CD14-positive monocyte (primary cell): ENCODE measurements at regions of chr19 and their contacts with region 1.

Region 1: DNA sequence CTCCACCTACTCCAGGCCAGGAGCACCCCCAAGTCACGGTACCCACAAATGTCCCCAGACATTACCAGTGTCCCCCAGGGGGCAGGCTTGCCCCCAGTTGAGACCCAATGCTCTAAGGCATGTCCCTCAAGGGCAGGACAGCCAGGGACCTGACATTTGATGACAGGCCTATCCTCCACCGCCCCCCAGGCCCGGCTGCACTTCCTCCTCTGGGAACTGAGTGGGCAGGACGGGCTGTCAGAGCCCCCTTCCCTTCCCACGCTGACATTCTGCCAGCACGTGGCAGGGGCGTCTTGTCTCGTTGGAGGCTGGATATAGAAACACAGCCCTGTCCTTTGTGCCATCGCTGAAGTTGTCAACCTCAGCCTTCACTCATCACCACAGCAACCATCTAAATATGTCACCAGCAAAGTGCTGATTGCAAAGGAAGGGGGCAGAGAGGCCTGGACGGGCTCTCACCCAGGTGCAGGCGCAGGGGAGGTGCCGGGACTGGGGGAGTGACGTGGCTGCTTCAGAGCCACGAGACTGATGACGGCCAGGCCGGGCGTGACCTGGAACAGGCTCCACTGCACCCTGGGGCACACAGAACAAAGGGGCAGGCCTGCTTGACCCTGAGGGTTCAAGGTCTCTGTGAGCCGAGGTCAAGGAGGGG is 38.4 kb downstream of the GNG7 start:
- DNase-seq: no peak
- H3K4me3 ChIP-seq: no peak overlapping the region
- H3K4me3 Mint-ChIP-seq: no peak overlapping the region
- H3K27ac ChIP-seq: no peak overlapping the region
- H3K27ac Mint-ChIP-seq: no peak overlapping the region
- H3K4me1 ChIP-seq: no peaks in the 10 kb centered on the region
- H3K4me1 Mint-ChIP-seq: no peaks in the 10 kb centered on the region
- H3K27me3 ChIP-seq: no peaks in the 10 kb centered on the region
- H3K27me3 Mint-ChIP-seq: peaks cover 2 to 10% (median 4%) of the 10 kb centered on the region in 3 donors
- CTCF ChIP-seq: peak; percentile 17

Region 2: DNA sequence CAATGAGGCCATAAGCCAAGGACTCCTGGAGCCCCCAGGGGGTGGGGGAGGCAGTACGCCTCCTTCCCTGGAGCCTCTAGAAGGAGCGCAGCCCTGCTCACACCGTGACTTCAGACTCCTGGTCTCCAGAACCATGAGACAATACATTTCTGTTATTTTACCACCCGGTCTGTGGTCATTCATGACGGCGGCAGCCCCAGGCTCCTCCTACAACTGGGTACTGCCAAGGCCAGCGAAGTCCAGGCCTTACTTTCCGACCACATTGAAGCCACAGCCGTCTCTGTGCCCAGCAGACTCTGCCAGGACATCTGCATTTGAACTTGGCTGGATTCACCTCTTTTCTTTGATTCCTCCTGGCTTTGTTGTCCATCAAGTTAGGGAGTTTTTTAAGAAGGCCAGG is 27.9 kb after region 1 on chr19:
- intact Hi-C with region 1: loop called (anchors 5 kb)
- DNase-seq: no peak
- H3K4me3 ChIP-seq: no peak overlapping the region
- H3K4me3 Mint-ChIP-seq: no peak overlapping the region
- H3K27ac ChIP-seq: no peak overlapping the region
- H3K27ac Mint-ChIP-seq: no peak overlapping the region
- H3K4me1 ChIP-seq: peaks cover 14 to 16% of the 10 kb centered on the region in 2 donors
- H3K4me1 Mint-ChIP-seq: peaks cover 21% of the 10 kb centered on the region
- H3K27me3 ChIP-seq: no peaks in the 10 kb centered on the region
- H3K27me3 Mint-ChIP-seq: peaks cover 0 to 2% (median 2%) of the 10 kb centered on the region in 3 donors
- CTCF ChIP-seq: no peak

Region 3: GRCh38 chr19:2699413-2700140 is 35.5 kb after region 1 on chr19:
- intact Hi-C with region 1: loop called (anchors 5 kb)
- DNase-seq: peak in 1 of 3 donors; percentile 0
- H3K4me3 ChIP-seq: no peak overlapping the region
- H3K4me3 Mint-ChIP-seq: no peak overlapping the region
- H3K27ac ChIP-seq: no peak overlapping the region
- H3K27ac Mint-ChIP-seq: peak overlapping the region in 1 of 7 donors; percentile 30
- H3K4me1 ChIP-seq: peaks cover 22 to 23% of the 10 kb centered on the region in 2 donors
- H3K4me1 Mint-ChIP-seq: peaks cover 45% of the 10 kb centered on the region
- H3K27me3 ChIP-seq: no peaks in the 10 kb centered on the region
- H3K27me3 Mint-ChIP-seq: peaks cover 0 to 6% (median 5%) of the 10 kb centered on the region in 3 donors
- CTCF ChIP-seq: no peak